ENCODE measurements at regions of chr20 and their contacts with region 1.

Region 1: DNA sequence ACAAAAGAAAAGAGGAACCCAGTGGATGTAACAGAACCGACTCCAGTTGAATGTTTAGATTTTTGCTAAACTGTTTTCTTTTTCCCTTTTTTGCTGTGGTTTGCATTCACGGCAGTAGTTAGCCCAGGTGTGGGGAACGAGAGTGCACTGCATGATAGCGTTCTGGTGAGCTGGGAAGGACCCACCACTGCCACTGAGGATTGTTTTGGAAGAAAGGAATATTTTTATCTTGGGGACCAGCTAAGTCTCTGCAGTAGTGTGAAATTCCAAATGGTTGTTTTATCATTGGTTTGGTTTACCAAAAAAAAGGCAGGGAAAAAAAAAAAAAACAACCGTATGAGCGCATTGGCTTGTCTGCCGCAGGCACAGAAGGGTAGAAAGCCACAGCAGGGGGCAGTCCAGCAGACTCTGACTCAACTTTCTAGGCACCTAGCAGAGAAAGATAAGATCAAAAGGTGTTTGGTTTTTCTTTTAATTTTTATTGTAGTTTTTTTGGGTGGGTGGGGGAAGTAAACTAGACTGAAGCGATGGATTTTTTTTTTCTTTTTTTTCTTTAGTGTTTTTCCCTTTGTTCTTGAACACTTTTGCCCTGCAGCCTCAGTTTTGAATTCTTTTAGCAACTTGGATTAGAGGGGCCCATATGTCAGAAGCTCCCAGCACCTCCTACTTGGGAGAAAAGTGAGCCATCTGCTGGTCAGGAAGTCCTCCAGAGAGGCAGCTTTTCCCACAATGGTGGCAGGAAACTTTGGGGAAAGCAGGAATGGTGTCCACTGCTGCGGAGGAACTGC is 13.5 kb upstream of the RAB5IF start:
- DNase-seq: no peak
- ATAC-seq: peak; percentile 67

Region 2: DNA sequence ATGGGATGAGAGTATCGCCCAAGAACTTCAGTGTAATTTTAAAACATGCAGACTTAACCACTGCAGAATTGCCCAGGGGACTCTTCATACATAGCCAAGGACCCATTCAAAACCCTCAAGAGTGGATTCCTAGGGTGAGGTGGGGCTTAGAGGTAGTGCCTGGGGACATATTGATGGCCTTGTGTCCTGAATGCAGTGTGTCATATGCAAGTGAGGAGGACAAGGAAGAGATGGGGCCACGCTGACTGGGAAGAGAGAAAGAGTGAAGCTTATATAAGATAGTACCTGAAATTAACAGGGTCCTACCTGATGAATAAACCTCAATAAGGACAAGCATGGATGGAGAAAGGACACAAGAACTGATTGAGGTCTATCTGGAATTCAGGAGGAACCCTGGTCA is 36.8 kb before region 1 on chr20:
- intact Hi-C with region 1: loop called (anchors 5 kb)
- DNase-seq: no peak
- ATAC-seq: no peak